HCT116 (cell line): ENCODE measurements at regions of chr5 and their contacts with region 1.

Region 1: DNA sequence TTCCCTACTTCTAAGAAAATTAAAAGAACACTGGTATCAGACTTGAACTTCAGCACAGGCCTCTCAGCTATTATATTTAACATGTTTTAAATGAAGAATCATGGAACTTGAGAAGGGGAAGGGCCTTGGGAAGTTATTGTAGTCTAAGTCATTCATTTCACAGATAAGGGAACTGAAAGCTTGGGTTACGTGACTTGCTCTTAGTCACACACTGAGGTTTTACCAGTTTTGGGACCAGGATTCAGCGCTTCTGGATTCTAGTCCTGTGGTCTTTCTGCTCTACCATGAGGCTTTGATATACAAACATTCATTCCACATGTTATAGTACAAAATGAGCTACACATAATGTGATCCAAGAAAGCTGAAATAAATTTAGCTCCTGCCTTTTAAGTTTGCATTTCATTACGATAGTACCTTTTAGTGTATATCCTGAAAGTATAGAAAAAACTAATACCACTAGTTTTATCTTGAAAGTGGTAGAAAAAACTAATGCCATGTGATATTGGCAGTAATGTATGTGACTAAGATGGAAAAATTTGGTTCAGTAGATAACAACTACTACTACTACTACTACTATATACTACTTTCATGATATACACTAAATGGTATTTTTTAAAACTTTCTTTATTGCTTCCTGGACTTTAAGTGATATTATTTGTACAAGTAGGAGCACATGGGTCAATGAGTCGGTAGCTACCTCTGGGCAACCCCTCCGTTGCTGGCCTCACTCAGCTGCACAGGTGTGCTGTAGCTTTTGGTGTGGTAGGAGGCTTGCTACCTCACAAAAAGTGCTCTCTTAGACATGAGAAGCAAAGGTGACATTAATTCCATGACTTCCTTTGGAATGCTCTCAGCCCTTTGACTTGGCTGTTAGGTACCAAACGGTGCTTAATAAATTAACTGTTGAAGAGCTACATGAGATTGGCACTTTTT is 40.7 kb downstream of the F2RL2 start:
- DNase-seq: no peak
- ATAC-seq: no peak
- H3K4me3 ChIP-seq: no peak overlapping the region
- H3K27ac ChIP-seq: no peak overlapping the region
- H3K4me1 ChIP-seq: no peaks in the 10 kb centered on the region
- H3K27me3 ChIP-seq: no peaks in the 10 kb centered on the region
- CTCF ChIP-seq: no peak
- POLR2A ChIP-seq: no peak
- RAD21 ChIP-seq: no peak

Region 2: GRCh38 chr5:76337953-76338451 is 244.5 kb before region 1 on chr5:
- CTCF ChIA-PET with region 1: interaction called, 9 read pairs
- POLR2A ChIA-PET with region 1: no interaction called
- RAD21 ChIA-PET with region 1: no interaction called
- intact Hi-C with region 1: loop called (anchors 1 kb)
- DNase-seq: peak; percentile 65
- ATAC-seq: peak; percentile 92
- H3K4me3 ChIP-seq: no peak overlapping the region
- H3K27ac ChIP-seq: no peak overlapping the region
- H3K4me1 ChIP-seq: peaks cover 5 to 10% of the 10 kb centered on the region in 2 experiments; a peak in 3 of 4 replicates
- H3K27me3 ChIP-seq: no peaks in the 10 kb centered on the region
- CTCF ChIP-seq: peak; percentile 52 to 60 (median 58)
- POLR2A ChIP-seq: no peak
- RAD21 ChIP-seq: peak; percentile 67

Region 3: DNA sequence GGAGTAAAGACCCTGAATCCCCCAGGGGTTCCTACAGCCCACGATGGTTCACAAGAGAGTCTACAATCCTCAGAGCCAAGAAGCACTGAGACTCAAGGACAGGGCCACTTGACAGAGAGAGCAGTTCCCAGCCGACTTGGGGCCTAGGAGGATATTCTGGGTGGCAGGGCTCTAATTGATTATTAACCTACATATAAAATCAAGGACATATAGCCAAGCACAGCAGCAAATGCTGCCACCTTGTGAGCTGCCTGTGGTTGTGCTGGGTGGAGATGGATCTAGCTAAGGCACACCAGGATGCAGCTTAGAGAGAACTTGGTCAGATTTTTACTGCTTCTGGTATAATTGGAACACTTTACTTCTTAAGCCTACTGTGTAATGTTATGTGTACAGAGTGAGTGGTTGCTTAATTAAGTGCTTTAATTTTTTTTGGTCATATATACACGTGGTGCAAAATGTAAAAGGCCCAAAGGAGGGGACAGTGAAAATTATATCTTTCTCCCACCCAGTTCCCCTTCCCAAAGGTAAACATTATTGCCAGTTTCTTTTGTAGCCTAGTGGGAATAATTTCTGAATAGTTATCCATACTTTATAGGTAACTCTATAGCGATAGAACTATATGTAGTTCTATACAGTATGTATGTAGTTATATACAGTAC is 38.1 kb before region 1 on chr5:
- CTCF ChIA-PET with region 1: interaction called, 11 read pairs
- POLR2A ChIA-PET with region 1: interaction called, 3 read pairs
- RAD21 ChIA-PET with region 1: no interaction called
- intact Hi-C with region 1: no loop called
- DNase-seq: peak; percentile 31
- ATAC-seq: peak; percentile 95
- H3K4me3 ChIP-seq: no peak overlapping the region
- H3K27ac ChIP-seq: no peak overlapping the region
- H3K4me1 ChIP-seq: no peaks in the 10 kb centered on the region
- H3K27me3 ChIP-seq: no peaks in the 10 kb centered on the region
- CTCF ChIP-seq: peak; percentile 63 to 65 (median 64); a peak in 5 of 6 replicates
- POLR2A ChIP-seq: no peak
- RAD21 ChIP-seq: peak; percentile 73

Region 4: DNA sequence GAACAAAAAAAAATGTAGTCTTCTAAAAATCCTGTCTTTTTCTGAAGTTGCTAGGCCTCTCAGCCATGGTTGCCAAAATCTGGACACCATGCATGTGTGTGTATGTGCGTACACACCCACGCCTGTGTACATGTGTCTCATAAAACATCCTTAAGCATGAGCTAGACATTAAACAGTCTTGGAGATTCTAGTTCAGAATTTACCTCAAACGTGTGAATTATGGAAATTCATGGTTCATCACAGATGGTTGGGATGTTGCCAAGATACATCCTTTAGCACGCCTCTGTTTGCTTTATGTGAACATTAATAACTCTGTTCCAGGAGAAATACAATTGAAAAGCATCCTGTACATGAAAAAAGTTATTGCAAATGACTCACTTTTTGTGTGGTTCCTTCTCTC is 12.3 kb before region 1 on chr5:
- CTCF ChIA-PET with region 1: interaction called, 11 read pairs
- POLR2A ChIA-PET with region 1: no interaction called
- RAD21 ChIA-PET with region 1: no interaction called
- intact Hi-C with region 1: no loop called
- DNase-seq: no peak
- ATAC-seq: no peak
- H3K4me3 ChIP-seq: no peak overlapping the region
- H3K27ac ChIP-seq: no peak overlapping the region
- H3K4me1 ChIP-seq: no peaks in the 10 kb centered on the region
- H3K27me3 ChIP-seq: no peaks in the 10 kb centered on the region; the same call in 1 of the 2 replicates
- CTCF ChIP-seq: no peak
- POLR2A ChIP-seq: no peak
- RAD21 ChIP-seq: no peak